Heart left ventricle (tissue), 16 donors: ENCODE measurements at regions of chr14 and their contacts with region 1.

Region 1: GRCh38 chr14:103688906-103689902 is 26.0 kb downstream of the XRCC3 start:
- DNase-seq: peak in 4 of 5 donors; percentile 46 to 64 (median 54)
- ATAC-seq: peak; percentile 34 to 72 (median 65)
- H3K4me3 ChIP-seq: peak overlapping the region in 1 of 12 donors; percentile 14
- H3K27ac ChIP-seq: peak overlapping the region in 3 of 12 donors; percentile 20 to 24 (median 21)
- H3K4me1 ChIP-seq: peaks cover 0 to 58% (median 20%) of the 10 kb centered on the region in 12 donors
- H3K27me3 ChIP-seq: no peaks in the 10 kb centered on the region
- CTCF ChIP-seq: no peak
- POLR2A ChIP-seq: no peak

Region 2: DNA sequence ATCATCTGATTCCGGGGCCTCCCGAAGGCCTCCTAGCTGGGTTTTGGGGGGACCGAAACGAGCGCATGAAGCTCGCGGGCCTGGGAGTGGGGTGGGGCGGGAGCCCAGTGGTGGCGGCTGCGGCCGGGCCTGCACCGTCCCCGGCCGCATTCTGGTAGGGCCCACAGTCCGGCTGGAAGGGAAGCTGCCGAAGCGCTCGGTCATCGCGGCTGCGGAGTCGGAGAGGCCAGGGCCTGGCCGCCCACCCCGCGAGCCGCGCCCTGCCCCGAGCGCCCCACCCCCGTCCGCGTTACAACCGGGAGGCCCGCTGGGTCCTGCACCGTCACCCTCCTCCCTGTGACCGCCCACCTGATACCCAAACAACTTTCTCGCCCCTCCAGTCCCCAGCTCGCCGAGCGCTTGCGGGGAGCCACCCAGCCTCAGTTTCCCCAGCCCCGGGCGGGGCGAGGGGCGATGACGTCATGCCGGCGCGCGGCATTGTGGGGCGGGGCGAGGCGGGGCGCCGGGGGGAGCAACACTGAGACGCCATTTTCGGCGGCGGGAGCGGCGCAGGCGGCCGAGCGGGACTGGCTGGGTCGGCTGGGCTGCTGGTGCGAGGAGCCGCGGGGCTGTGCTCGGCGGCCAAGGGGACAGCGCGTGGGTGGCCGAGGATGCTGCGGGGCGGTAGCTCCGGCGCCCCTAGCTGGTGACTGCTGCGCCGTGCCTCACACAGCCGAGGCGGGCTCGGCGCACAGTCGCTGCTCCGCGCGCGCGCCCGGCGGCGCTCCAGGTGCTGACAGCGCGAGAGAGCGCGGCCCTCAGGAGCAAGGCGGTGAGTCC is 60.3 kb before region 1 on chr14 and contains the start of gene KLC1:
- intact Hi-C with region 1: loop called in 1 of 10 experiments (anchors 10 kb)
- DNase-seq: peak; percentile 88 to 94 (median 91)
- ATAC-seq: peak; percentile 51 to 86 (median 80)
- H3K4me3 ChIP-seq: peak within 1 kb of the TSS; percentile 83 to 100 (median 95)
- H3K27ac ChIP-seq: peak within 1 kb of the TSS; percentile 97 to 100 (median 99)
- H3K4me1 ChIP-seq: peaks cover 6 to 75% (median 59%) of the 10 kb centered on the region in 12 donors
- H3K27me3 ChIP-seq: no peaks in the 10 kb centered on the region
- CTCF ChIP-seq: peak in 3 of 12 donors; percentile 7 to 17 (median 14)
- POLR2A ChIP-seq: peak in 1 of 2 donors; percentile 85
- total RNA-seq, gene KLC1: 127 to 241 (median 150) TPM

Region 3: GRCh38 chr14:103641181-103641580 is 48.0 kb before region 1 on chr14:
- intact Hi-C with region 1: loop called in 2 of 10 experiments (anchors 5 kb)
- DNase-seq: no peak
- ATAC-seq: no peak
- H3K4me3 ChIP-seq: no peak overlapping the region
- H3K27ac ChIP-seq: no peak overlapping the region
- H3K4me1 ChIP-seq: peaks cover 0 to 70% (median 35%) of the 10 kb centered on the region in 12 donors
- H3K27me3 ChIP-seq: no peaks in the 10 kb centered on the region
- CTCF ChIP-seq: no peak
- POLR2A ChIP-seq: no peak

Region 4: GRCh38 chr14:103646189-103646588 is 43.0 kb before region 1 on chr14:
- intact Hi-C with region 1: loop called in 2 of 10 experiments (anchors 5 kb)
- DNase-seq: no peak
- ATAC-seq: peak in 1 of 4 donors; percentile 41
- H3K4me3 ChIP-seq: no peak overlapping the region
- H3K27ac ChIP-seq: no peak overlapping the region
- H3K4me1 ChIP-seq: peaks cover 0 to 51% (median 14%) of the 10 kb centered on the region in 12 donors
- H3K27me3 ChIP-seq: no peaks in the 10 kb centered on the region
- CTCF ChIP-seq: no peak
- POLR2A ChIP-seq: no peak

Region 5: DNA sequence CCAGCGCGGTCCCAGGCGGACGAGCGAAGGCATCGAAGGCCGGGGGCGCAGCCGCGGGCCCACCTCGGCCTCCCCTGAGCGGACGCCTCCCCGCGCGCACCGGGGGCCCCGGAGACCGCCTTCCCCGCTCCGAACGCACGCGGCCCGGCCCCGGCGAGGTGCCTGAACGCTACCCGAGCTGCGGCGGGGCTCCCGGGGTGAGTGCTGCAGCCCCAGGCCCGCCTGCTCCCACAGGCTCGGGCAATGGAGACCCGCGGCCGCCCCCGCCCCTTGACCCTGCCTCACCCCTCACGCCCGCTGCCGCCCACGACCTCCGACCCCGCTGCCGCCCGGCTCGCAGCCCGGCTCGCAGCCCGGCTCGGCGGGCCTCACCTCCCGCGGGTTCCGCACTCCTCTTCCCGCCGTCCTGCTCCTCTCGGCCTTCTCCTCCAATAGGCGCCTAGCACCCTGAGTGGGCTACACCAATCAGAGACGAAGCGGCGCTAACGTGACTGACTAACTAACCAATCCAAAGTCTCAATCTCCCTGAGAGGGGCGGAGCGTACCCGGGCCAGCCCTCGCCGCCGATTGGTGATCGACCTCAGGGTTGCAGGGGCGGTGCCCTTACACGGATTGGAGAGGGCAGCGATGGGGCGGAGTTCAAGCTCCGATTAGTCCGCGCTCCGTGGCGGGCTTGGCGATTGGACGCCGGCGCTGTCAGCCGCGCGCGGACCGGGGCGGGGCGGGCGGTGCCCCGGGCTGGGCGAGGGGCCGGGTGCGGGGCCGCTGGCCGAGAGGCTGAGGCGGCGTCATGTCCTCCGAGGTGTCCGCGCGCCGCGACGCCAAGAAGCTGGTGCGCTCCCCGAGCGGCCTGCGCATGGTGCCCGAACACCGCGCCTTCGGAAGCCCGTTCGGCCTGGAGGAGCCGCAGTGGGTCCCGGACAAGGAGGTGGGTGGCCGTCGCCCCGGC is 26.1 kb after region 1 on chr14 and contains the starts of genes XRCC3 and ZFYVE21:
- intact Hi-C with region 1: loop called in 1 of 10 experiments (anchors 5 kb)
- DNase-seq: peak; percentile 99 to 100 (median 100)
- ATAC-seq: peak; percentile 95 to 98 (median 96)
- H3K4me3 ChIP-seq: peak within 1 kb of the TSS; percentile 64 to 97 (median 82)
- H3K27ac ChIP-seq: peak within 1 kb of the TSS; percentile 71 to 91 (median 84)
- H3K4me1 ChIP-seq: peaks cover 17 to 73% (median 51%) of the 10 kb centered on the region in 12 donors
- H3K27me3 ChIP-seq: no peaks in the 10 kb centered on the region
- CTCF ChIP-seq: no peak
- POLR2A ChIP-seq: peak; percentile 70 to 91
- total RNA-seq, gene XRCC3: 1.9 to 8.7 (median 3.1) TPM
- total RNA-seq, gene ZFYVE21: 44.1 to 79.4 (median 52.5) TPM

Region 6: GRCh38 chr14:103730490-103731035 is 41.4 kb after region 1 on chr14:
- intact Hi-C with region 1: no loop called
- DNase-seq: peak; percentile 71 to 90 (median 80)
- ATAC-seq: peak; percentile 83 to 91 (median 85)
- H3K4me3 ChIP-seq: no peak overlapping the region
- H3K27ac ChIP-seq: peak overlapping the region in 6 of 12 donors; percentile 23 to 64 (median 42)
- H3K4me1 ChIP-seq: peaks cover 0 to 37% (median 12%) of the 10 kb centered on the region in 12 donors
- H3K27me3 ChIP-seq: no peaks in the 10 kb centered on the region
- CTCF ChIP-seq: peak in 1 of 12 donors; percentile 12
- POLR2A ChIP-seq: no peak